Endothelial cell of umbilical vein (primary cell): ENCODE measurements at regions of chrX and their contacts with region 1.

Region 1: DNA sequence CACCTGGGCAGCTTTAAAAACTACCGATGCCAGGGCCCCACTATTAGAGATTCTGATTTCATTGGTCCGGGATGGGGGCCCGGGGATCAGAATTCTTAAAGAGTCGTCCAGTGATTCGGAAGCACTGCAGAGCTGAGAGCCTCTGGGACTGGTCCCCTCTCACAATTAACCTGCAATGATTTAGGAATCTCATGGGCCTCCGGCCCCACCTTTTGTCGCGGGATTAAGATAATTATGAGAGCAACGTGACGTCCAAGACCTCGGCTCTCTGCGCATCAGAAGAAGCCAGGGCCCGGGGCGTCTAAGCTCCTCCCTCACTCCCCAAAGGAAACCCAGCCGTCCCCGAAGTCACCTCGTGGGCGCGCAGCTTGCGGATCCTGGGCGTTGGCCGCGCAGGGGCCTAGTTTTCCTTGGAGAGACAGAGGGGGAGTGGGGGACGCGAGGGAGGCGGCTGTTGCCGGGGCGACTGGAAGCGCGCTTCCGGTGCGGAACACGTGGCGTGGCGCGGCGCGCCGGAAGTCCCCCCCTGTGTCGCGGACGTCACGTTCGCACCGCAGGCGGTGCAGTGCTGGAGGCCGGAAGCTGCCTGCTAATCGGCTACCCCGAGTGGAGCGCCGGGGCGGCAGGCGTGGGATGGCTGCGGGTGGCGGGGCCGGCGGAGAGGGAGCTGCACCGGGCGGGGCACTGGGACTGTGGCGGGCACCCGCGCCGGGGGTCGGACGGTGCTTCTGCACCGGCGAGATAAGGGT is at the start of gene GEMIN8:
- DNase-seq: peak; percentile 73
- H3K4me3 ChIP-seq: peak within 1 kb of the TSS; percentile 58 to 89 (median 77)
- H3K27ac ChIP-seq: peak within 1 kb of the TSS; percentile 92
- H3K4me1 ChIP-seq: peaks cover 24% of the 10 kb centered on the region
- H3K27me3 ChIP-seq: no peaks in the 10 kb centered on the region
- CTCF ChIP-seq: no peak
- POLR2A ChIP-seq: peak; percentile 64
- total RNA-seq, gene GEMIN8: 17.7 and 18.5 TPM in 2 replicates

Region 2: GRCh38 chrX:13506574-13506973 is 523.0 kb before region 1 on chrX:
- CTCF ChIA-PET with region 1: interaction called, 35 read pairs
- POLR2A ChIA-PET with region 1: no interaction called
- dilution Hi-C with region 1: no loop called
- intact Hi-C with region 1: loop called (anchors 1 kb)
- DNase-seq: peak; percentile 34
- H3K4me3 ChIP-seq: no peak overlapping the region
- H3K27ac ChIP-seq: no peak overlapping the region
- H3K4me1 ChIP-seq: no peaks in the 10 kb centered on the region
- H3K27me3 ChIP-seq: no peaks in the 10 kb centered on the region
- CTCF ChIP-seq: peak; percentile 37 to 41
- POLR2A ChIP-seq: no peak

Region 3: GRCh38 chrX:13658602-13659001 is 371.0 kb before region 1 on chrX:
- CTCF ChIA-PET with region 1: interaction called, 8 read pairs
- POLR2A ChIA-PET with region 1: no interaction called
- dilution Hi-C with region 1: no loop called
- intact Hi-C with region 1: loop called (anchors 1 kb)
- DNase-seq: peak; percentile 52
- H3K4me3 ChIP-seq: no peak overlapping the region
- H3K27ac ChIP-seq: no peak overlapping the region
- H3K4me1 ChIP-seq: peaks cover 3% of the 10 kb centered on the region
- H3K27me3 ChIP-seq: no peaks in the 10 kb centered on the region
- CTCF ChIP-seq: peak; percentile 19 to 24
- POLR2A ChIP-seq: no peak

Region 4: DNA sequence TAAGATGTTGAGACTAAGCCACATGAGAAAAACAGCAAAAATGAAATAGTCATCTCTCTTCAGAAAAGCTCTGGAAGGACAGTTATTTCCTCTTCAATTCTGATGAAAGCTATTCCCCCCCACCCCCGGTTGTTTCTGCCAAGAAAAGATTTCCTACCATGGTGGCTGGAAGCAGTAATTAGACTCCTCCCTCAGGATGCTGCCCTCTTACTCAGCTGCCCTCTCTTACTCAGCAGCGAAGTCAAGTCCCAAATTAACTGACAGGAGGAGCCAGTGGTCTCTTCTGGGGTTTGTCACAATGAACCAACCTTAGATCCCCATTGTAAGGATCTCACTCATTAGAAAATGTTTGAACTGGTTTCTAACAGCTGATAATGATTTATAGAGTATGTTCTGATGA is 250.7 kb before region 1 on chrX:
- CTCF ChIA-PET with region 1: interaction called, 9 read pairs
- POLR2A ChIA-PET with region 1: no interaction called
- dilution Hi-C with region 1: no loop called
- intact Hi-C with region 1: loop called (anchors 1 kb)
- DNase-seq: peak; percentile 68
- H3K4me3 ChIP-seq: no peak overlapping the region
- H3K27ac ChIP-seq: no peak overlapping the region
- H3K4me1 ChIP-seq: peaks cover 4% of the 10 kb centered on the region
- H3K27me3 ChIP-seq: no peaks in the 10 kb centered on the region
- CTCF ChIP-seq: no peak
- POLR2A ChIP-seq: no peak

Region 5: GRCh38 chrX:14064626-14065432 is 35.2 kb after region 1 on chrX:
- CTCF ChIA-PET with region 1: no interaction called
- POLR2A ChIA-PET with region 1: no interaction called
- dilution Hi-C with region 1: no loop called
- intact Hi-C with region 1: no loop called
- DNase-seq: no peak
- H3K4me3 ChIP-seq: no peak overlapping the region
- H3K27ac ChIP-seq: no peak overlapping the region
- H3K4me1 ChIP-seq: no peaks in the 10 kb centered on the region
- H3K27me3 ChIP-seq: no peaks in the 10 kb centered on the region
- CTCF ChIP-seq: no peak
- POLR2A ChIP-seq: no peak

Region 6: GRCh38 chrX:14309431-14309830 is 279.8 kb after region 1 on chrX:
- CTCF ChIA-PET with region 1: no interaction called
- POLR2A ChIA-PET with region 1: no interaction called
- dilution Hi-C with region 1: no loop called
- intact Hi-C with region 1: no loop called
- DNase-seq: no peak
- H3K4me3 ChIP-seq: no peak overlapping the region
- H3K27ac ChIP-seq: no peak overlapping the region
- H3K4me1 ChIP-seq: no peaks in the 10 kb centered on the region
- H3K27me3 ChIP-seq: no peaks in the 10 kb centered on the region
- CTCF ChIP-seq: no peak
- POLR2A ChIP-seq: no peak